BJ (cell line): ENCODE measurements at regions of chr22 and their contacts with region 1.

Region 1: GRCh38 chr22:21947040-21948014 is 5.3 kb downstream of the PPM1F start:
- DNase-seq: no peak
- H3K4me3 ChIP-seq: no peak overlapping the region
- H3K27me3 ChIP-seq: no peaks in the 10 kb centered on the region
- CTCF ChIP-seq: peak; percentile 75

Region 2: GRCh38 chr22:21712894-21713712 is 234.2 kb before region 1 on chr22:
- CTCF ChIA-PET with region 1: interaction called, 59 read pairs
- POLR2A ChIA-PET with region 1: no interaction called
- DNase-seq: peak; percentile 15
- H3K4me3 ChIP-seq: no peak overlapping the region
- H3K27me3 ChIP-seq: no peaks in the 10 kb centered on the region
- CTCF ChIP-seq: peak; percentile 85

Region 3: DNA sequence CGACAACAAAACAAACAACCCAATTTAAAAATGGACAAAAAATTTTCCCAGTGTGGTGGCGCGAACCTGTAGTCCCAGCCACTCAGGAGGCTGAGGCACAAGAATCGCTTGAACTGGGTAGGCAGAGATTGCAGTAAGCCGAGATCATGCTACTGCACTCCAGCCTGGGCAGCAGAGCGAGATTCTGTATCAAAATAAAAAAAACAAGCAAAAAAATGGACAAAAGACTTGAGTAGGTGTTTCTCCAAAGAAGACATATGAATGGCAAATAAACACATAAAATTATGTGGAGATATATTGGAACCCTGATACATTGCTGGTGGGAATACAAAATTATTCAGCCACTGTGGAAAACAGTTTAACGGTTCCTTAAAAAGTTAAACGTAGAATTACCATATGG is 52.5 kb before region 1 on chr22:
- CTCF ChIA-PET with region 1: no interaction called
- POLR2A ChIA-PET with region 1: no interaction called
- DNase-seq: no peak
- H3K4me3 ChIP-seq: no peak overlapping the region
- H3K27me3 ChIP-seq: no peaks in the 10 kb centered on the region
- CTCF ChIP-seq: no peak